ENCODE measurements at regions of chr7 and their contacts with region 1.

Region 1: DNA sequence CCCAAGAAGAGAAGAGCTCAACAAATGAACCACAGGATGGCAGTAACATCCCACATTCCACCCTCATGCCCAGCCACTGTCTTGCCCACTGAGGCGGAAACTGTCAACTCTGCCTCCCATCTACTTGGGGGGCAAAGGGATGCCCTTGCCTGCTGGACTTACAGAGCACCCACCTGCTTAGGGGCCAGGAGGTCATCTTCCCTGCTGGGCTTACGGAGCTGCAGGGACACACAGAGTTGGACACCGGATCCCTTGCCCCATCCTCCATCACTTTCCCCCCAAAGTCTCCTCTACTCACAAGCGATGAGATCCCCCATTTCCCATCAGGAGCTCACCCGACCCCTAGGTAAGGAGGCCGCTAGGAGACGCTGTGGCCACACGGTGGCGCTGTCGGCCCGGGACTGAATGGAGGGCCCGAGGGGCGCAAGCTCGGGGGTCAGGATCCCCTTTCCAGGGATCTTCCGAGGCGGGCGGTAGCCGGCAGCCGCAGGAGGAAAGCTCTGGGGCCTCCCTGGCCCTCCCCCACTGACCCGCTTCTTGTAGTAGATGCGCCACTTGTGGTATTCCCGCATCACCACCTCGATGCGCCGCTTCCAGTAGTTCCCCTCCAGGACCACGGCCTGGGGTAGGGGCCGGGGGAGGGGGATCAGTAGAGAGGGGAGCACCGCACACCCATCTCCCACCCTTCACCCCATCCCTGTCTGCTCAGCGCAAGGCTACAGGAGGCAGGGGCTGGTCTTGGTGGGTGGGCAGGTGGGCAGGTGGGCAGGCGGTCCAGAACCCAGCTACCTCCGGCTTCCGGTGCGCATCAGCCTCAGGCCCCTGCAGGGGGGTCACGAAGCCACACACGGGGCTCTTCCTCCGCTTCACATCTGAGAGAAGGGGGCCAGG is 17.3 kb downstream of the MLXIPL start:
- DNase-seq: peak; percentile 98
- H3K4me3 ChIP-seq: peak overlapping the region; percentile 13 to 57; a peak in 2 of 4 replicates
- H3K27ac ChIP-seq: no peak overlapping the region
- H3K4me1 ChIP-seq: no peaks in the 10 kb centered on the region; a peak in 1 of 4 replicates
- H3K27me3 ChIP-seq: peaks cover 13% of the 10 kb centered on the region
- CTCF ChIP-seq: peak; percentile 100
- EP300 ChIP-seq: no peak
- RAD21 ChIP-seq: peak; percentile 91

Region 2: GRCh38 chr7:73423519-73424488 is 183.2 kb before region 1 on chr7:
- CTCF ChIA-PET with region 1: no interaction called
- POLR2A ChIA-PET with region 1: no interaction called
- DNase-seq: no peak
- H3K4me3 ChIP-seq: no peak overlapping the region
- H3K27ac ChIP-seq: no peak overlapping the region
- H3K4me1 ChIP-seq: peaks cover 0 to 2% of the 10 kb centered on the region in 2 experiments; a peak in 1 of 4 replicates
- H3K27me3 ChIP-seq: no peaks in the 10 kb centered on the region
- CTCF ChIP-seq: no peak
- EP300 ChIP-seq: no peak
- RAD21 ChIP-seq: no peak

Region 3: DNA sequence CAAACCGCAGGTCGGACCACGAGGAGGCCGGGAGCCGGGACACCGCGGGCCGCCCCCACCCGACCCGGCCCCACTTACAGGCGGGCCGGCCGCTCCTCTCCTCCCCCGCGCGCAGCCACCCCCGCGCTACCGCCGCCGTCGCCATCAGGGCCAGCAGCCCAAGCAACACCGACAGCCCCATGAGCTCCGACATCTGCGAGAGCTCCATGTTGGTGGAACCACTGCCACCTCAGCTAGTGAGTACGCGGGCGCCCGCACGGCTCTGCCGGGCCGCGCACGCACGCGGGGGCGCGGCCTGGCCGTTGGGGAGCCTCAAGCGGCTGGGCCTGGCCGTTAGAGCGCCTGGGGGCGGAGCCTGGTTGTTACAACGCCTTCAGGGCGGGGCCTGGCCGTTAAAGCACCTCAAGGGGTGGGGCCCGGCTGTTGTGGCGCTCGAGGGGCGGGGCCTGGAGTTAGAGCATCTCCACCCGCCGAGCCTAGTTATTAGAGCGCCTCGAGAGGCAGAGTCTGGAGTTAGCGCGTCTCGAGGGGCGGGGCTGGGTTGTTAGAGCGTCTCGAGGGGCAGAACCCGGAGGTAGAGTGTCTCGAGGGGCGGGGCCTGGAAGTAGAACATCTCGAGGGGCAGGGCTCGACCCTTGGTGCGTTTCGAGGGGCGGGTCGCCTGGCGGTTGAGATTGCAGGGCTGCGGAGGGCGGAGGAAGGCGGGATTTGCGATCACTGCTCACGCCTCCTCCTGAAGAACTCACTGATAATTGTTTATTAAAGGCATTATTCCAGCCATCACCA is 28.5 kb before region 1 on chr7 and contains the start of gene TBL2:
- CTCF ChIA-PET with region 1: interaction called, 12 read pairs
- POLR2A ChIA-PET with region 1: interaction called, 3 read pairs
- DNase-seq: peak; percentile 100
- H3K4me3 ChIP-seq: peak within 1 kb of the TSS; percentile 63 to 100
- H3K27ac ChIP-seq: peak within 1 kb of the TSS; percentile 80 to 89
- H3K4me1 ChIP-seq: peaks cover 6 to 10% of the 10 kb centered on the region in 2 experiments; a peak in 3 of 4 replicates
- H3K27me3 ChIP-seq: no peaks in the 10 kb centered on the region
- CTCF ChIP-seq: no peak
- EP300 ChIP-seq: peak in 1 of 2 experiments; percentile 20; a peak in 1 of 4 replicates
- RAD21 ChIP-seq: no peak; the same call in 1 of the 2 replicates
- polyA plus RNA-seq, gene TBL2: 45.5 and 63.6 TPM in 2 replicates

Region 4: DNA sequence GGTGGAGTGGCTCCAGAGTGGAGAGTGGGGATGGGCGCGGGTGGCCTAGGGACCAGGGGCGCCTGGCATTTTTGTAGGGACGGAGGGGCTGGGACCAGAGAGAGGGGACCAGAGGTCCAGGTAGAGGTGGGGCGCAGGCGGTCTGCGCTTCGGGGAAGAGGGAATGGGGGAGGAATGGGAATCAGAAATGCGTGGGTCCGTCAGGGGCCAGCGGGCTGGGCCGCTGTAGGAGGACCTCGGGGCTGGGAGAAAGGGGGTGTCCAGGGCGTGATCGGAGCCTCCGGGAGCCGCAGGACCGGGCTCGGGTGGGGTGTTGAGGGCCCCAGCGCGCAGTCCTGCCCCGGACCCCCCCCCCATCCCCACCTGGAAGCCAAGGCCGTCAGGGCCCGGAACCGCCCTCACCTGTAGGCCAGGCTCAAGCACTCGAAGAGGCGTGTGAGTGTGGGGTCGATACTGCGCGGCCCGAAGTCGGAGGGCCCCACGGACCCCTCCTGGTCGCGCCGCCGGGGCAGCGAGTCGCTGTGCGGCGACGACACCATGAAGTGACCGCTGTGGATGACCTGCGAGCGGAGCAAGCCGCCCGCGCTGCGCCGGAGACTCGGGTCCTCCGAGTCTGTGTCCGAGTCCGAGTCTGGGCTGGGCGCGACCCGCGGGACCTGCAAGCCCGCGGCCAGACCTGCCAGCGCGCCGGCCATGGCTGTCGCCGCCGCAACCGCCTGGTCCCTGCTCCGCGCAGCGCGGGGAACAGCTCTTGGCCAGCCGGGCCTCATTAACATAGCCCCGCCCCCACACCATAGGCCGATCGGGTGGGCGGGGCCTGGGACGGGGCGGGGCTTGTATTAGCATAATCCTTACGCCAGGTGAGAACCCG is 17.0 kb after region 1 on chr7 and contains the start of gene MLXIPL:
- CTCF ChIA-PET with region 1: interaction called, 235 read pairs
- POLR2A ChIA-PET with region 1: no interaction called
- DNase-seq: peak; percentile 100
- H3K4me3 ChIP-seq: peak within 1 kb of the TSS; percentile 48 to 61
- H3K27ac ChIP-seq: no peak within 1 kb of the TSS
- H3K4me1 ChIP-seq: no peaks in the 10 kb centered on the region; a peak in 1 of 4 replicates
- H3K27me3 ChIP-seq: peaks cover 50% of the 10 kb centered on the region
- CTCF ChIP-seq: no peak
- EP300 ChIP-seq: no peak
- RAD21 ChIP-seq: no peak
- polyA plus RNA-seq, gene MLXIPL: 0.21 and 0.32 TPM in 2 replicates

Region 5: DNA sequence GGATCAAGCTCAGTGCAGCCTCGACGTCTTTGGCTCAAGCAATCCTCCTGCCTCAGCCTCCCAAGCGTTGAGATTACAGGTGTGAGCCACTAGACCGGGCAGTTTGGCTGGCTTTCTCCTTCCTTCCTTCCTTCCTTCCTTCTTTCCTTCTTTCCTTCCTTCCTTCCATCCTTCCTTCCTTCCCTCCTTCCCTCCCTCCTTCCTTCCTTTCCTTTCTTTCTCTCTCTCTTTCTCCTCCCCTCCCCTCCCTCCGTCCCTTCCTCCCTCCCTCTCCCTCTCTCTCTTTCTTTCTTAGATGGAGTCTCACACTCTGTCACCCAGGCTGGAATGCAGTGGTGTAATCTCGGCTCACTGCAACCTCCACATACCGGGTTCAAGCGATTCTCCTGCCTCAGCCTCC is 53.0 kb after region 1 on chr7:
- CTCF ChIA-PET with region 1: interaction called, 125 read pairs
- POLR2A ChIA-PET with region 1: no interaction called
- DNase-seq: no peak
- H3K4me3 ChIP-seq: no peak overlapping the region
- H3K27ac ChIP-seq: no peak overlapping the region
- H3K4me1 ChIP-seq: no peaks in the 10 kb centered on the region
- H3K27me3 ChIP-seq: peaks cover 37% of the 10 kb centered on the region; the same call in 1 of the 2 replicates
- CTCF ChIP-seq: no peak
- EP300 ChIP-seq: no peak
- RAD21 ChIP-seq: no peak

Region 6: DNA sequence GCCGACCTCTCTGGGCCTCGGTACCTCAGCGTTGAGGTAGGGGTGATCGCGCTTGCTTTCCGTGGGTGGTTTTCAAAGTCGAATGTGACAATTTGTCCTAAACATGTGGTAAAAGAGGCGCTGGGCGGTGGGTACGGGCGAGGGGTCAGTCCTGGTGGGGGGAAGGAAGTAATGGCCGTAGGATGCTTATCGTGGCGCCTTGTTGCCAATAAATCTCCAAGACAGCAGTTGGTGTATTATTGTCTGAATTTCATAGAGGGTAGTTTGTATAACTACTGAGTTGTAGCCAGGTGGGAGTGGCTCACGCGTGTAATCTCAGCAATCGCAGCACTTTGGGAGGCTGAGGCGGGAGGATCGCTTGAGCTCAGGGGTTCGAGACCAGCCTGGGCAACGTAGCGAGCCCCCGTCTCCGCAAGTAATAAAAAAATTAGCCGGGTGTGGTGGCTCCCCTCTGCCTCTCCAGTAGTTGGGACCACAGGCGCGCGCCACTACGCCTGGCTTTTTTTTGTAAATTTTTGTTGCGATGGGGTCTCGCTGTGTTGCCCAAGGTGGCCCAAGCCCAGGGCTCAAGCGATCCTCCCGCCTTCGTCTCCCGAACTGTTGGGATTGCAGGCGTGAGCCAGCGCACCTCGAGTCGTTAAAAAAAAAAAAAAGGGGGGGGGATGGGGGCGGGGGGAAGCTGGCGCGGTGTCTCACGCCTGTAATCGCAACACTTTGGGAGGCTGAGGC is 77.1 kb after region 1 on chr7:
- CTCF ChIA-PET with region 1: interaction called, 12 read pairs
- POLR2A ChIA-PET with region 1: no interaction called
- DNase-seq: no peak
- H3K4me3 ChIP-seq: peak overlapping the region; percentile 79 to 90
- H3K27ac ChIP-seq: peak overlapping the region; percentile 31 to 67; a peak in 3 of 4 replicates
- H3K4me1 ChIP-seq: peaks cover 19 to 20% of the 10 kb centered on the region in 2 experiments; a peak in 3 of 4 replicates
- H3K27me3 ChIP-seq: no peaks in the 10 kb centered on the region
- CTCF ChIP-seq: no peak
- EP300 ChIP-seq: no peak
- RAD21 ChIP-seq: no peak

Region 7: GRCh38 chr7:73712773-73713172 is 105.7 kb after region 1 on chr7:
- CTCF ChIA-PET with region 1: interaction called, 27 read pairs
- POLR2A ChIA-PET with region 1: no interaction called
- DNase-seq: no peak
- H3K4me3 ChIP-seq: no peak overlapping the region
- H3K27ac ChIP-seq: 0 out of 4 replicates have a peak overlapping the region, but pooled peaks of 1 of the 2 experiments have one; percentile 0
- H3K4me1 ChIP-seq: peaks cover under 1 to 49% of the 10 kb centered on the region in 2 experiments; a peak in 3 of 4 replicates
- H3K27me3 ChIP-seq: no peaks in the 10 kb centered on the region
- CTCF ChIP-seq: no peak
- EP300 ChIP-seq: no peak
- RAD21 ChIP-seq: no peak

Region 8: DNA sequence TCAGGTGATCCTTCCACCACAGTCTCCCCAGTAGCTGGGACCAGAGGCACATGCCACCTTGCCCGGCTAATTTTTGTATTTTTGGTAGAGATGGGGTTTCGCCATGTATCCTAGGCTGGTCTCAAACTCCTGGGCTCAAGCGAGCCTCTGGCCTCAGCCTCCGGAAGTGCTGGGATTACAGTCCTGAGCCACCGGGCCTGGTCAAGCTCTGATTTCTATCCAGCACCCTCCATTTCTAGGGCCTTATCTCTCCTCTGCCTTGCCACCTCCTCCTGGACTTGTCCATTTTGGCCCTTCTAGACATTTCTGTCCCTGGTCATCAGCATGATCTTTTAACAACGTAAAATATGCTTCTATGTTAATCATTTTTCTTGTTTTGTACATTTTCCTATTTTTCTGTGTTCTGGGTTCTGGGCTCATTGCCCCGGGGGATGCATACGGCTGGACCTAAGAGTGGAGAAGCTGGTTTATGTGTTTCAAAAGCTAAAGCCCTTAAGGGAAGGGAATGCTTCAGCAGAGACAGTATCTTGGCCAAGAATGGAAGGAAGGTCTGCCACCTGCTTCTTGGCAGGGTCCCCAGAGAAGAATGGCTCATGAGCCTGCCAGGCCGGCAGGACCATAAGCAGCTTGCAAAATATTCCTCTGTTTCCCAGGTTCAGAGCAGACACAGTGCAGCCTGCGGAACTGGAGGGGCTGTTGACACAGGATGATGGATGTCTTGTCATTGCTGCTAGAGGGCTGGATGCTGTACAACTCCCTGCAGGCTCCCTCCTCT is 139.1 kb after region 1 on chr7:
- CTCF ChIA-PET with region 1: interaction called, 10 read pairs
- POLR2A ChIA-PET with region 1: no interaction called
- DNase-seq: no peak
- H3K4me3 ChIP-seq: no peak overlapping the region
- H3K27ac ChIP-seq: peak overlapping the region in 1 of 2 experiments; percentile 4; a peak in 1 of 4 replicates
- H3K4me1 ChIP-seq: peaks cover 0 to 7% of the 10 kb centered on the region in 2 experiments; a peak in 1 of 4 replicates
- H3K27me3 ChIP-seq: no peaks in the 10 kb centered on the region
- CTCF ChIP-seq: no peak
- EP300 ChIP-seq: no peak
- RAD21 ChIP-seq: no peak